PC-9 (cell line): ENCODE measurements at regions of chr2 and their contacts with region 1.

Region 1: DNA sequence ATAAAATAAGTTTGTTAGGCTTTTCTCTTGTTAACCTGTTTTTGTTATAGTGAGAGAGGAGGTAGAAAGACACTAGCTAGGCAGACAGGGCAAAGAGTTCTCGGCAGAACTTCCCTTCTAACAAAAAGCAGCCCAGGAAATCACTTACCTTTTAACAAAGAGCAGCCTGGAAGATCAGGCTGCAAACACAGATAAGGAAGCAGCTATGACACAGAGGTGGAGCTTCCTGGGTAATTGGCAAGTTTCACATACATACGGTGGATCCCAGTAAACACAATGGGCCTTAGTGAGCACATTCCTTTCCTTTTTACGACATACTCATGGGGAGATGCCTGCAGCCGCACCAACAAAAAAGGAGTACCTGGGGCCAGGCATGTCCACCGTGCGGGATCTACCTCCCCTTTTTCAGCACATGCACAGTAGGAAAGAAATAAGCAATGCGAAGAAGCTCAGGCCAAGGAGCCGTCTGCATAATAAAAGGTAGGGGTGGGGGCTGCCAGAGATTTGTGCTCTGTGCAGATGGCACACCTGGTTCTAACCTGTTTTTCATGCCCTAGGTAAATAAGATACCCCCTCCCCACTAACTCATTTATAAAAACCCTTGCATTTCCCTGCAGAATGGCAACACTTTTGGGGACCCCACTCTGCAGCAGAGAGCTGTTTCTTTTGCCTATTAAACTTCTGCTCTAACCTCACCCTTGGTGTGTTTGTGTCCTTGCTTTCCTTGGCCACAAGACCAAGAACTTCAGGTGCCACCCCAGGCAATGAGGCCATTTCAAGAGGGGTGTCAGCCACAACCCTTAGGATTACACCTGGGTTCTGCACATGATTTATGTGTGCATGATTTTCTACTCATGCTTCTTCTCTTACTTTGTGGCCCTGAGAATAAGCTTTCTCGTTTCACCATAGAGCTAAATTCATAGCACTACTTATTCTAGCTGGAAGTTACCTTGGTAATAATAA is 26.5 kb downstream of the MDH1 start:
- DNase-seq: peak; percentile 57 to 91
- H3K4me3 ChIP-seq: peak overlapping the region; percentile 51
- H3K27ac ChIP-seq: peak overlapping the region; percentile 94
- H3K4me1 ChIP-seq: peaks cover 38% of the 10 kb centered on the region
- H3K27me3 ChIP-seq: no peaks in the 10 kb centered on the region
- CTCF ChIP-seq: no peak

Region 2: GRCh38 chr2:63588385-63589147 is 26.7 kb before region 1 on chr2 and contains the starts of genes MDH1 and WDPCP:
- CTCF ChIA-PET with region 1: no interaction called
- POLR2A ChIA-PET with region 1: interaction called, 4 read pairs
- intact Hi-C with region 1: loop called (anchors 1 kb)
- DNase-seq: peak; percentile 94 to 100
- H3K4me3 ChIP-seq: peak within 1 kb of the TSS; percentile 63
- H3K27ac ChIP-seq: peak within 1 kb of the TSS; percentile 72
- H3K4me1 ChIP-seq: peaks cover 23% of the 10 kb centered on the region
- H3K27me3 ChIP-seq: no peaks in the 10 kb centered on the region
- CTCF ChIP-seq: no peak
- total RNA-seq, gene MDH1: 157 and 162 TPM in 2 replicates
- total RNA-seq, gene WDPCP: 15.2 and 15.5 TPM in 2 replicates

Region 3: DNA sequence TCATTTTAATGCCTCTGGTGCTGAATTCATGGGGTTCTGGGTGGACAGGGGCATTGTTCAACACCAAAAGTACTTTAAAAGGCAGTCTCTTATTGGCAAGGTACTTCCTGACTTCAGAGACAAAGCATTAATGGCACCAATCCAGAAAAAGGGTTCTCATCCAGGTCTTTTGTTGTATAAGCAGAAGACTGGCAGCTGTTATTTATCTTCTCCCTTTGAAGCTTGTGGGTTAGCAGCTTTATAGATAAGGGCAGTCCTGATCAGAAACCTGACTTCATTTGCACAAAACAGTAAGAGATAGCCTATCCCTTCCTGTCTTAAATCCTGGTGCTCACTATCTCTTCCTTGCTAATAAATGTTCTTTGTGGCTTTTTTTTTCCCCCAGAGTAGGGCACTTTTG is 335.1 kb after region 1 on chr2:
- CTCF ChIA-PET with region 1: no interaction called
- POLR2A ChIA-PET with region 1: no interaction called
- intact Hi-C with region 1: no loop called
- DNase-seq: no peak
- H3K4me3 ChIP-seq: no peak overlapping the region
- H3K27ac ChIP-seq: no peak overlapping the region
- H3K4me1 ChIP-seq: no peaks in the 10 kb centered on the region
- H3K27me3 ChIP-seq: no peaks in the 10 kb centered on the region
- CTCF ChIP-seq: no peak